ENCODE measurements at regions of chr9 and their contacts with region 1.

Region 1: GRCh38 chr9:757246-757881 is 84.1 kb upstream of the DMRT1 start:
- DNase-seq: no peak
- H3K4me3 Mint-ChIP-seq: no peak overlapping the region
- H3K27ac Mint-ChIP-seq: no peak overlapping the region
- H3K4me1 Mint-ChIP-seq: peaks cover 57% of the 10 kb centered on the region
- H3K27me3 Mint-ChIP-seq: no peaks in the 10 kb centered on the region

Region 2: GRCh38 chr9:706606-707459 is 50.5 kb before region 1 on chr9:
- intact Hi-C with region 1: loop called (anchors 5 kb)
- DNase-seq: peak; percentile 14
- H3K4me3 Mint-ChIP-seq: peak overlapping the region; percentile 86
- H3K27ac Mint-ChIP-seq: peak overlapping the region; percentile 81
- H3K4me1 Mint-ChIP-seq: peaks cover 12% of the 10 kb centered on the region
- H3K27me3 Mint-ChIP-seq: peaks cover 6% of the 10 kb centered on the region

Region 3: DNA sequence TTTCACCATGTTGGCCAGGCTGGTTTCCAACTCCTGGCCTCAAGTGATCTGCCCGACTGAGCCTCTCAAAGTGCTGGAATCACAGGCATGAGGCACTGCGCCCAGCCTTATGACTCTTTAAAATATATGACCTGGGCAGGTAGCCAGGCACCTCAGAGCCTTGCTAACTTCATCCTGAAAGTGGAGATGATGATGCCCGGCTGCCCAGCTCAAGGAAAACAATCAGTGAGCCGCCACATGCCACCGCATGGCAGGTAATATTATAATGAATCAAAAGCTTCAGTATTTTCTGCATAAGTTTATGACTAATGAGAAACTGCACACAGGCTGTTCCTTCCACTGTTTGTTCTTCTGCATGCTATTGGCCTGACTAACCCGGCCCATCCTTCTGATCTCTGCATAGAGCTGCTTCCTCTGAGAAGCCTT is 53.8 kb after region 1 on chr9:
- intact Hi-C with region 1: no loop called
- DNase-seq: no peak
- H3K4me3 Mint-ChIP-seq: no peak overlapping the region
- H3K27ac Mint-ChIP-seq: no peak overlapping the region
- H3K4me1 Mint-ChIP-seq: no peaks in the 10 kb centered on the region
- H3K27me3 Mint-ChIP-seq: peaks cover 2% of the 10 kb centered on the region

Region 4: GRCh38 chr9:893843-894420 is 136.6 kb after region 1 on chr9:
- intact Hi-C with region 1: no loop called
- DNase-seq: peak; percentile 45
- H3K4me3 Mint-ChIP-seq: no peak overlapping the region
- H3K27ac Mint-ChIP-seq: no peak overlapping the region
- H3K4me1 Mint-ChIP-seq: peaks cover 4% of the 10 kb centered on the region
- H3K27me3 Mint-ChIP-seq: peaks cover 19% of the 10 kb centered on the region